Caco-2 (cell line): ENCODE measurements at regions of chr18 and their contacts with region 1.

Region 1: DNA sequence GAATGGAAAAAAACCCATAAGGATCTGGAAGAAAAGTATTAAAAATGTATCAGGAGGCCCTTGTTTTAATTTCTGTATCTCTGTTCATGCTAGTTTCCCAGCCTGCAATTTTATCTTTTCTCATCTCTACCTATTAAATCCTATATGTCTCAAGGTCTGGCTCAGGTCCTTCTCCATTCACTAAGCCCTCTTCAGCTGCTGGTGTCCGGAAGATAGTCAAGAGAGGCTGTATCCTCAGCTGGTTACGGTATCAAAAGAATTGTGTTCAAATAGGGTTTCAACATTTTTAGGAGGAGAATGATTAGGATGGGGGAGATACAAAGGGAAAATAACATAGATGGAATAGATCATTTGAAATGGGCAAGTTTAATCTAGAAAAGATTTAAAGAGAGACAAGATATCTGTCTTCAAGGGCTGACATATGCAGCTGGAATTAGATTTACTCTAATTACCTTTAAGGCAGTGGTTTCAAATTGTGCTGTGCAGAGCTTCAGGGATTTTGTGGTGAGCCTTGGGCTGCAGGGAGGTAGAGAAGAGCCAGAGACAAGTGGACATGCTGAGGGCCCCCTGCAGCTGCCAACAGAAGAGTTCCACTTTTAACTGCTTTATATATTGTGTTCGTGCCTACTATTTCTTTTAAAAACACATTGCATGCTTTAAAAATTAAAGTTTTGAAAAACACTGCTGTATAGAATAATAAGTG is 24.1 kb downstream of the GREB1L start:
- DNase-seq: no peak
- H3K4me3 ChIP-seq: no peak overlapping the region
- H3K4me3 Mint-ChIP-seq: no peak overlapping the region
- H3K27ac Mint-ChIP-seq: peak overlapping the region; percentile 56
- H3K4me1 ChIP-seq: peaks cover 94% of the 10 kb centered on the region
- H3K4me1 Mint-ChIP-seq: peaks cover 64% of the 10 kb centered on the region
- H3K27me3 ChIP-seq: no peaks in the 10 kb centered on the region
- H3K27me3 Mint-ChIP-seq: no peaks in the 10 kb centered on the region
- CTCF ChIP-seq: no peak

Region 2: DNA sequence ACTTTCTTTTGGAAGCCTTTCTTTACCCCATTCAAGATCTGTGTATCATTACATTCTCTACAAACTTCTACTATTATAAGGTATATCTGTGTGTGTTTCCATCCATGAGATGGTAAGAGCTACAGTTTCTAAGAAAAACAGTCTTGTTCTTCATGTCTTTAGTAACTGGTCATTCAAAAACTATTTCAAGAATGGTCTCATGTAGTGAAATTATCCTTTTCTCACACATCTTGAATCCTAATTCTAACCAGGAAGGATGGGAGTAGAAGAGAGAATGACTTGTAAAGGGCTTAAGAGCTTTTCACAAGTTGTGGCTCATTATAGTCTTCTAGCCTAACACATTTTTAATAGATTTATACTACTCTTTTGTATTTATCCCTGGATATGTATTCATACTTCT is 201.8 kb before region 1 on chr18:
- CTCF ChIA-PET with region 1: no interaction called
- POLR2A ChIA-PET with region 1: no interaction called
- intact Hi-C with region 1: no loop called
- DNase-seq: no peak
- H3K4me3 ChIP-seq: no peak overlapping the region
- H3K4me3 Mint-ChIP-seq: no peak overlapping the region
- H3K27ac Mint-ChIP-seq: no peak overlapping the region
- H3K4me1 ChIP-seq: peaks cover 11% of the 10 kb centered on the region
- H3K4me1 Mint-ChIP-seq: peaks cover 8% of the 10 kb centered on the region
- H3K27me3 ChIP-seq: no peaks in the 10 kb centered on the region
- H3K27me3 Mint-ChIP-seq: no peaks in the 10 kb centered on the region
- CTCF ChIP-seq: no peak

Region 3: DNA sequence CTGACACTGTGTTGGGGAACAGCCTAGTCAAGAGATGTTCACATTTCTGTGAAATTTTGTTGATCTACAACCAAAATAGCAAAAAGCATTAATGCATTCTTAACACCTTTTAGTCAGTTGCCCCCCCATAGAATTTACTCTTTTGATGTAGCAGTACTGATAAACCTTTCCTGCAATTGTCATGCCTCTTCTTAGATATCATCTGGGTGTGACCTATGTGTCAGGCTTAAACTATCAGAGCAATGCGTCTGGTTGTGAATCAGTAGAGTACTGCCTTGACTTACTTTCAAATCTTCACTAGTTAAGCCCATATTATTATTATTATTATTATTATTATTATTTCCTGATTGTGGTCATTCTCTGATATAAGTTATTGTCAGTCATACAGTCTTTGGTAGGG is 37.8 kb after region 1 on chr18:
- CTCF ChIA-PET with region 1: no interaction called
- POLR2A ChIA-PET with region 1: no interaction called
- intact Hi-C with region 1: loop called (anchors 2 kb)
- DNase-seq: no peak
- H3K4me3 ChIP-seq: no peak overlapping the region
- H3K4me3 Mint-ChIP-seq: no peak overlapping the region
- H3K27ac Mint-ChIP-seq: peak overlapping the region; percentile 68
- H3K4me1 ChIP-seq: peaks cover 85% of the 10 kb centered on the region
- H3K4me1 Mint-ChIP-seq: peaks cover 58% of the 10 kb centered on the region
- H3K27me3 ChIP-seq: no peaks in the 10 kb centered on the region
- H3K27me3 Mint-ChIP-seq: no peaks in the 10 kb centered on the region
- CTCF ChIP-seq: no peak